ENCODE measurements at regions of chr1 and their contacts with region 1.

Region 1: DNA sequence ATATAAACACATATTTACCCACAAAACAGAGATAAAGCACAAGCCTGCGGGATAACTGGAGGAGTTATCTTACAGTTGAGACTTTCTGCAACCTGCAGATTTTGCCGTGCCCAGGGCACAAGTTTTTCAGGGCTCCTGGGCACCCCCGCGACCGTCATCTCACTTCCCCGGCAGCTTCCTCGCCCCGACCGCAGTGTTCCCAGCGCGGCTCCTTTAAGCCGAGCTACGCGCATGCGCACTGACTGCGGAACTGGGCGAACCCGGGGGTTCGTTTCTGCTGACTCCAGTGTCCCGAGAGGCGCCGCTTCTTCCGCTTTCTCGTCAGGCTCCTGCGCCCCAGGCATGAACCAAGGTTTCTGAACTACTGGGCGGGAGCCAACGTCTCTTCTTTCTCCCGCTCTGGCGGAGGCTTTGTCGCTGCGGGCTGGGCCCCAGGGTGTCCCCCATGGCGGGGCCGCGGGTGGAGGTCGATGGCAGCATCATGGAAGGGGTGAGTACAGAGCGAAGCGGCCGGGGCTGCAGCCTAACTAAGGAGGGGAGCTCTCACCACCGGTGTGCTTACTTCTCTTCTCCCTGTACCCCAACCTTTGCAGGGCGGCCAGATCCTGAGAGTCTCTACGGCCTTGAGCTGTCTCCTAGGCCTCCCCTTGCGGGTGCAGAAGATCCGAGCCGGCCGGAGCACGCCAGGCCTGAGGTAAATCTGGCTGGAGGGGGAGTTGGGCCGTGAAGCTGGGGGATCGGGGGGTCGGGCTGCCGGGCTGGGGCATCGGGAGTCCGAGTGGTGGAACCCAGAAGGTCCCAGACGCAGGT is at the start of gene RTCA:
- DNase-seq: peak; percentile 99
- ATAC-seq: peak; percentile 99
- H3K4me3 ChIP-seq: peak within 1 kb of the TSS; percentile 89 to 92
- H3K27ac ChIP-seq: peak within 1 kb of the TSS in 1 of 2 donors; percentile 52
- H3K4me1 ChIP-seq: peaks cover 0 to 6% of the 10 kb centered on the region in 2 donors
- H3K27me3 ChIP-seq: no peaks in the 10 kb centered on the region
- total RNA-seq, gene RTCA: 22.3 to 26.6 TPM

Region 2: GRCh38 chr1:100132566-100133477 is 133.3 kb before region 1 on chr1 and contains the starts of genes SASS6 and TRMT13:
- intact Hi-C with region 1: loop called in 1 of 2 experiments (anchors 10 kb)
- DNase-seq: peak; percentile 98
- ATAC-seq: peak; percentile 100
- H3K4me3 ChIP-seq: peak within 1 kb of the TSS; percentile 78 to 91
- H3K27ac ChIP-seq: peak within 1 kb of the TSS in 1 of 2 donors; percentile 16
- H3K4me1 ChIP-seq: peaks cover 0 to 2% of the 10 kb centered on the region in 2 donors
- H3K27me3 ChIP-seq: no peaks in the 10 kb centered on the region
- total RNA-seq, gene SASS6: 2.1 to 2.5 TPM
- total RNA-seq, gene TRMT13: 11.7 to 18.4 TPM

Region 3: DNA sequence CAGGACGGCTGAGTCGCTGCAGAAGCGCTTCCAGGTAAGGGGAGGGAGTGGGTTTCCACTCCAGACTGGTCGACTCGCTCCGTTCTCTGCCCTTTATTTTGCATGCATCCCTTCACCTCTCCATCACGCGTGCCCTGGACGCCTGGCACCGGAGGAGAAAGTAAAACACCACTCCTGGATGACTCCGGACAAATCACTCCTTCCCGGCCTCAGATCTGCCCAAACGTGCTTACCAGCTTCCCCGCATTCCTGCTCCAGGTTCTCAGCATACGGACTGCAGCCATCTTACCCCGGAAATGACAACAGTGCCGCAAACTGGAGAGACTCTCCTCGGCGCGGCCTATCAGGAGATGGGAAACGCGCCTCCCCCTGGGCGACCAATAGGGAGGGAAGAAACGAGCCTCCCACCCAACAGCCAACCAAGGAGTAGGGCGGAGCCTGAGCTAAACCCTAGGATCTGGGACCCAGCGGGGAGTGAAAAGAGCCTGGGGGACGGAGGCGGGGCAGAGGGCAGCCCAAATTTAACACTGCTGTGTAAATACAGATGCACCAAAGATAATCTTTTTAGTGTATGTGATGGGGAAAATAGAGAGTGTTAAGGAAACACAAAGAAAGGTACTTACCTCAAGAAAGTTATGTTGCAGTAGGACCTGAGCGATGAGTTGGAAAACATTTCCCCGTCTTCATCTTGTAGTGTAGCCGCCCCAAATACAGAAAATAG is 16.4 kb before region 1 on chr1 and contains the start of gene DBT:
- intact Hi-C with region 1: loop called in 1 of 2 experiments (anchors 2 kb)
- DNase-seq: peak; percentile 96 to 97
- ATAC-seq: peak; percentile 100
- H3K4me3 ChIP-seq: peak within 1 kb of the TSS; percentile 75 to 91
- H3K27ac ChIP-seq: peak within 1 kb of the TSS; percentile 47 to 90
- H3K4me1 ChIP-seq: peaks cover 0 to 3% of the 10 kb centered on the region in 2 donors
- H3K27me3 ChIP-seq: peaks cover 0 to 2% of the 10 kb centered on the region in 2 donors
- total RNA-seq, gene DBT: 10.8 to 13.0 TPM

Region 4: DNA sequence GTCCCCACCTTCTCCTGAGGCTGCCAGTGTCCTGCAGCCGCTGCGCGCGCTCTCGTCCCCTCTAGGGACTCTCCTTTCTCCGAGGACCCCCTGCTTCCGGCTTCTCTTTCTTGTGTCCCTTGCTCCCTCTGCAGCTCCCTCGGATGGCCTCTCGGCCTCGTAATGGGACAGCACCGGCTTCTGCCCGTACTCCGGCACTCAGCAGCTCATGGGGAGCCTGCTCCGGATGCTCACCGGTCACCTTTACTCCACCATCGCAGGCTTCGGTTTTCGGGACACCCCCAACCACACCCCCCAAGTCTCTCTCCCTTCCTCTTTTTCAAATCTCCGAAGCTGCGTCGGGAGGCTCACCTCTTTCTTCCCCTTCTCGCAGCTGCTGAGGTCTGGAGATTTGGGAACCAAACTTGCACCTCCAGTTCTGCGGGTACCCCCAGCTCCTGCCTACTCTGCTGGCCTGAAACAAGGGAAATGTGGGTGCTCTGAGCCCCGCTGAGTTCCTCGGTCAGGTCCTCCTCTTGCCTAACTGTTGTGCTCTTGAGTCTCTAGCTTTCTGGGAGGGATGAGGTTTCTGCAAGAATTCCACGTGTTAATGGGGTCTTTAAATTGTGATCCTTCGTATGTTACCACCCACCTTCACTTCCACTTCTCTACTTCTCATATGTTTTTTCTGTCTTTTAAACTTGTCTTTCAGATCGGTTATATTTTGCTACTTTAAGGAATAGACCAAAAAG is 87.1 kb after region 1 on chr1:
- intact Hi-C with region 1: no loop called
- DNase-seq: peak in 1 of 2 donors; percentile 78
- ATAC-seq: peak; percentile 6
- H3K4me3 ChIP-seq: peak overlapping the region; percentile 86 to 93
- H3K27ac ChIP-seq: peak overlapping the region in 1 of 2 donors; percentile 55
- H3K4me1 ChIP-seq: peaks cover 0 to 2% of the 10 kb centered on the region in 2 donors
- H3K27me3 ChIP-seq: no peaks in the 10 kb centered on the region